Vagina (tissue), 2 donors: ENCODE measurements at regions of chr6 and their contacts with region 1.

Region 1: DNA sequence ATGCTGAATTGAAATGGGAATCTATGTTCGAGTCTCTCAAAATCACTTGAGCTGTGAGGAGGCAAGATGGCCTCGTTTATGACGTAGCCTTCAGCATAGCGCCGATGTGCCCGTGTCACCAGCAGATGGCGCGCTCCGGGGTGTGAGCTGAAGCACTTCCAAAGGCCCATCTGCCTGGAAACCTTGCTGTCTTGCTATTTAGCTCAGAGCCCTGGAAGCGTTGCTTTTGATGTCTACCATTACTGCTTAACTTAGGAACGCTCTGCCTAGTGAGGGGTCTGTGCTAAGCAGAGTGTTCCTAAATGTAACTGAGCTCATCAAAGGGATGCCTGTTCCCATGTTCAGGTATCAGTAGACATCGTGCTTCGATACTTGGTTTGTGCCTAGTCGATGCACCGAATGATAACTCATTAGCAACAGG is 67.7 kb downstream of the SYCP2L start:
- DNase-seq: no peak
- H3K4me3 ChIP-seq: no peak overlapping the region
- H3K27ac ChIP-seq: no peak overlapping the region
- H3K4me1 ChIP-seq: no peaks in the 10 kb centered on the region
- H3K27me3 ChIP-seq: no peaks in the 10 kb centered on the region
- CTCF ChIP-seq: peak in 2 of 3 experiments; percentile 1 to 20
- POLR2A ChIP-seq: no peak

Region 2: GRCh38 chr6:10521104-10521808 is 433.3 kb before region 1 on chr6 and contains the start of gene GCNT2:
- intact Hi-C with region 1: no loop called
- DNase-seq: no peak
- H3K4me3 ChIP-seq: no peak within 1 kb of the TSS
- H3K27ac ChIP-seq: no peak within 1 kb of the TSS
- H3K4me1 ChIP-seq: no peaks in the 10 kb centered on the region
- H3K27me3 ChIP-seq: no peaks in the 10 kb centered on the region
- CTCF ChIP-seq: no peak
- POLR2A ChIP-seq: no peak
- total RNA-seq, gene GCNT2: 17.2 TPM

Region 3: GRCh38 chr6:10939840-10940239 is 14.8 kb before region 1 on chr6:
- intact Hi-C with region 1: no loop called
- DNase-seq: no peak
- H3K4me3 ChIP-seq: no peak overlapping the region
- H3K27ac ChIP-seq: no peak overlapping the region
- H3K4me1 ChIP-seq: no peaks in the 10 kb centered on the region
- H3K27me3 ChIP-seq: no peaks in the 10 kb centered on the region
- CTCF ChIP-seq: no peak
- POLR2A ChIP-seq: no peak

Region 4: DNA sequence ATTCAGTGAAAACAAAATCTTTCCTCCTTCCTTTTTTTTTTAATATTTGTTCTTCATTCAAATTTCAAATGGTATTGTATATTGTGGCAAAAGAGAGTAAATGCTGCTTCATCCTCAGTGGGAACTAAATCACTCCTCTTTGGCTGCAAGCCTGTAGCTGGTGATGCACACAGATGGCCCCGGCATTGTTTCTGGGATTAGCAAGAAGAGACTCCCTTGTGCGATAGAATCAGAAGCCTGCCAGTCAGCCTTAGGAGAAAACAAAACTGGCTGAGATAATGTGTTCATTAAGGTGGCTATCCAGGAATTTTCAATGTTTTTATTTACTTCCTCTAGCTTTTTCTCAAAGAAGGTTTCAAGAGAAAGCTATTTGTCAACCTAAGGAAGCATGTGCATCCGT is 110.2 kb after region 1 on chr6:
- intact Hi-C with region 1: loop called (anchors 10 kb)
- DNase-seq: no peak
- H3K4me3 ChIP-seq: no peak overlapping the region
- H3K27ac ChIP-seq: no peak overlapping the region
- H3K4me1 ChIP-seq: no peaks in the 10 kb centered on the region
- H3K27me3 ChIP-seq: no peaks in the 10 kb centered on the region
- CTCF ChIP-seq: no peak
- POLR2A ChIP-seq: no peak